Stomach (tissue), 19 donors: ENCODE measurements at regions of chr20 and their contacts with region 1.

Region 1: DNA sequence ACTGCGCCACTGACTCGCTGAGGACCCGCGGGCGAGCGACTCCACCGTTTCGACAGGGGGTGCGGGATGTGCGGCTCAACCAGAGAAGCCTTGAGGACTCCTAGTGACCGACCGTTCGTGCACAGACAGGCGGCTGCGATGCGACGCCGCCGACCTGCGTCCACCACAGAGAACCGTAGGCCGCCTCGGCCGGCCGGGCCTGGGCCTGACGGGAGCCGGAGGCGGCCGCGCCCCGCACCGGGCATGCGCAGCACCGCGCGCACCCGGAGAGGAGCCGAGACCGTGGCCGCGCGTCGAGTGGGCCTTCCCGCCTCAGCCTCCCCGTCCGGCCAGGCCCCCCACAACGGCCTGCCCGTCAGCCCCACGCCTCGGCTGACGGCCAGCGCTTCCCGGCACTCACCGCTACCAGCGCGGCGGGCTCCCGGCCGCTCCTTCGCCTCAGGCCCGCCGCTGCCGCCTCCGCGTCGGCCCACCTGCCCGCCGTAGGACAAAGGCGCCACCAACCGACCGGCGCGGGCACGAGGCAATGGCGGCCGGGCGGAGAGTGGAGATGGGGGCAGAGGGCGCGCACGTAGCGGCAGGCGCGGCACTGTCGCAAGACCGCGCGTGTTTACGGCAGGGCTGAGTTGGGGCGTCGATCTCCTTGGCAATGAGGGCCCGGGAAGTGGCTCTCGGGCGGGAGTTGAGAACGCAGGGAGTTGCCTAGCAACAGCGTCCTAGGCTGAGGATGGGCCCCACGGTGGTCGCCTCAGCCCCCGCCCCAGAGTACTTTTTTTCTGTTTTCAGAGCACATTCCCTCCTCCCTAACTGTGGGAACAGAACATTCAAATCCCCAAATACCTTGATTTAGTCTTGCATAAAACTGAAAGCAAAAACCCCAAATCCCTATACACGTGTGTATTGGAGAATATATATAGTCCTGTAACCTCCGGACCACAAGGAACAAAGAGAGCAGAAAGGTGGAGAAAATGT is at the start of gene NCOA5:
- DNase-seq: peak; percentile 95 to 99
- H3K4me3 ChIP-seq: peak within 1 kb of the TSS; percentile 66 to 85 (median 80)
- H3K27ac ChIP-seq: peak within 1 kb of the TSS; percentile 94 to 99 (median 99)
- H3K4me1 ChIP-seq: peaks cover 37 to 50% (median 46%) of the 10 kb centered on the region in 4 donors
- H3K27me3 ChIP-seq: no peaks in the 10 kb centered on the region
- CTCF ChIP-seq: peak in 1 of 7 experiments; percentile 32
- EP300 ChIP-seq: no peak
- POLR2A ChIP-seq: peak in 1 of 4 donors; percentile 54
- total RNA-seq, gene NCOA5: 4.3 to 58.9 (median 9.5) TPM

Region 2: DNA sequence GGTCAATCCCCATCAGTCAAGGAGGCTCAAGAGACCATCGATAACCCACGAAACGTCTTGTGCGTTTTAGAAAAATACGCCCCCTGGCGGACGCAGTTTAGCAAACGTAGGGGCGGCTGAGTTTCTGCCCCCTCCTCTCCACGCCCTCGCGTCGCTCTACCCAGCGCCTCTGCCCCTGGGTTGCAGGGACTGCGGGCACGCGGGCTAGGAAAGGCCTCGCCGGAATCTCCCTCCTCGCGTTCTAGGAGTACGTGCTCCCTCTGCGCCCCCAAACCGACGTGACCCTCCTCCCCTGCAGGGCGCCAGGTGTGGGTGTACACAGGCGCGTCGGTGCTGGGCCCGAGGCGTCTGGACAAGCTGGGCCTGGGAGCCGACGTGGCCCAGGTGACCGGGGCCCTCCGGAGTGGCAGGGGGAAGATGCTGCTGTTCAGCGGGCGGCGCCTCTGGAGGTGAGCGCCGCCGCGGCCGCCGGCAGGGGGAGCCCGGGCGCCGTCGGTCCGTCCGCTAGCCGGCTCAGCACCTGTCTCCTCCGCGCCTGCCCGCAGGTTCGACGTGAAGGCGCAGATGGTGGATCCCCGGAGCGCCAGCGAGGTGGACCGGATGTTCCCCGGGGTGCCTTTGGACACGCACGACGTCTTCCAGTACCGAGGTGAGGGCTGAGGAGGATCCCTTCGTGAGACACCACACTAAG is 75.7 kb before region 1 on chr20:
- intact Hi-C with region 1: loop called (anchors 10 kb)
- DNase-seq: peak; percentile 68 to 84
- H3K4me3 ChIP-seq: peak overlapping the region in 2 of 4 donors; percentile 21 to 33
- H3K27ac ChIP-seq: no peak overlapping the region
- H3K4me1 ChIP-seq: peaks cover 6 to 46% (median 18%) of the 10 kb centered on the region in 4 donors
- H3K27me3 ChIP-seq: peaks cover 36 to 95% (median 58%) of the 10 kb centered on the region in 3 donors
- CTCF ChIP-seq: peak in 5 of 7 experiments; percentile 40 to 87 (median 72)
- EP300 ChIP-seq: no peak
- POLR2A ChIP-seq: no peak

Region 3: GRCh38 chr20:46169245-46170171 is 79.8 kb after region 1 on chr20:
- intact Hi-C with region 1: no loop called
- DNase-seq: no peak
- H3K4me3 ChIP-seq: no peak overlapping the region
- H3K27ac ChIP-seq: no peak overlapping the region
- H3K4me1 ChIP-seq: peaks cover 0 to 6% (median 2%) of the 10 kb centered on the region in 4 donors
- H3K27me3 ChIP-seq: peaks cover 8 to 87% (median 35%) of the 10 kb centered on the region in 3 donors
- CTCF ChIP-seq: no peak
- EP300 ChIP-seq: no peak
- POLR2A ChIP-seq: no peak